ENCODE measurements at regions of chr9 and their contacts with region 1.

Region 1: DNA sequence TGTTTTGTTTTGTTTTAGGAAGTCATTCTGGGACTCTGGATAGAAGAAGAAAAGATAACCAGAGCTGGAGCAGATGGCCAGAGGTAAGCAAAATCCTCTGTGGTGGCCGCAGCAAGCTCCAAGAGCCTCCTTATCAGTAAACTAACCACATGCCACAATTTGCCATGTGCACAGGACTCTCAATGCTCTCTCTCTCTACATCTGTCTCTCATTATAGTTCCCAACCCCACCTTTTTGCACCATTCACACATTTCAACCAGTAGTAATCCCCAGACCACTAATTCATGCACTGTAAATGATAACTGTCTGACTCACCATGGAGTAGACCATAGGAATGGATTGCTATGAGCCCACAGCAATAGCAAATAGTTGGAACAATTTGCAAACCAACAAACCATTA is 526.1 kb downstream of the TLR4 start:
- DNase-seq: no peak
- ATAC-seq: no peak
- H3K4me3 ChIP-seq: no peak overlapping the region
- H3K4me3 Mint-ChIP-seq: no peak overlapping the region
- H3K27ac ChIP-seq: no peak overlapping the region
- H3K27ac Mint-ChIP-seq: no peak overlapping the region
- H3K4me1 ChIP-seq: no peaks in the 10 kb centered on the region
- H3K4me1 Mint-ChIP-seq: no peaks in the 10 kb centered on the region
- H3K27me3 ChIP-seq: no peaks in the 10 kb centered on the region
- H3K27me3 Mint-ChIP-seq: no peaks in the 10 kb centered on the region
- CTCF ChIP-seq: no peak

Region 2: GRCh38 chr9:117907420-117907819 is 322.9 kb before region 1 on chr9:
- CTCF ChIA-PET with region 1: no interaction called
- POLR2A ChIA-PET with region 1: no interaction called
- intact Hi-C with region 1: no loop called
- DNase-seq: no peak
- ATAC-seq: no peak
- H3K4me3 ChIP-seq: no peak overlapping the region
- H3K4me3 Mint-ChIP-seq: no peak overlapping the region
- H3K27ac ChIP-seq: no peak overlapping the region
- H3K27ac Mint-ChIP-seq: no peak overlapping the region
- H3K4me1 ChIP-seq: no peaks in the 10 kb centered on the region
- H3K4me1 Mint-ChIP-seq: no peaks in the 10 kb centered on the region
- H3K27me3 ChIP-seq: no peaks in the 10 kb centered on the region
- H3K27me3 Mint-ChIP-seq: peaks cover 14% of the 10 kb centered on the region
- CTCF ChIP-seq: no peak

Region 3: DNA sequence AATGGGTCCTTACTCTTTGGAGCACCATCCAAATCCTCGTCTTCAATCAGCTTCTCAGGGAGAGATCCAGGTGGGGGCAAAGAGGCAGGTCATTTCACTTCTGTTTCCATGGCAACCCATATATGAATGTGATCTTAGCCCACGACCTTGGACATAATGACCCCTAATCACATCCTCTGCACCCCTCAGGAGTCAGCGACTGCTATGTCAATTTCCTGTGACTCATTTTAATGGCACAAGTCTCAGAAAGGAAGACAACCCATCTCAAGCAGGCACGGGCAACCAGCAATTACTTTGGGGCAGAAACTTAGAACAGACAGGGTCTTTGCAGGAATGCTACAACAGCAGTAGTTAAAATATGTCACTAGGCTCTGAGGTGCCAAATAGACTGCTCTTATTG is 65.1 kb after region 1 on chr9:
- CTCF ChIA-PET with region 1: no interaction called
- POLR2A ChIA-PET with region 1: no interaction called
- intact Hi-C with region 1: loop called in 1 of 2 experiments (anchors 10 kb)
- DNase-seq: no peak
- ATAC-seq: no peak
- H3K4me3 ChIP-seq: no peak overlapping the region
- H3K4me3 Mint-ChIP-seq: no peak overlapping the region
- H3K27ac ChIP-seq: no peak overlapping the region
- H3K27ac Mint-ChIP-seq: no peak overlapping the region
- H3K4me1 ChIP-seq: no peaks in the 10 kb centered on the region
- H3K4me1 Mint-ChIP-seq: no peaks in the 10 kb centered on the region
- H3K27me3 ChIP-seq: no peaks in the 10 kb centered on the region
- H3K27me3 Mint-ChIP-seq: no peaks in the 10 kb centered on the region
- CTCF ChIP-seq: no peak

Region 4: DNA sequence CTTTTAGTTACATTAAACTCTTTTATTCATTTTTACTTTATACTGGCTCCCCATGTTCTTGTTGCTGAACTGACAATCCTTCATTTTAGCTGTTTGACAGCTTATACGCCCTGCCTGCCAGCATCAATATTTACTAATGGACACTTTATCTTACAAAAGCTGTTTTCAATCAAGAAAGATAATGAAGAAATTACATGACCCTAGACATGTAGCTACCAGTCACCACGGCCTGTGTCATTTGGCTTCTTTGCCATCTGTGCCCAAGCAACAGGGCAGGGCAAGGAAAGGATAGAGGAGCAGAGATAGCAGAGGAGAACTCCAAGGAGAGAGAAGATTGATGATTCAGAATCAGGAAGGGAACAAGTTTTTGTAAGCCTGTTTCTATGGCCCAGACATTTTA is 491.6 kb after region 1 on chr9:
- CTCF ChIA-PET with region 1: no interaction called
- POLR2A ChIA-PET with region 1: no interaction called
- intact Hi-C with region 1: no loop called
- DNase-seq: no peak
- ATAC-seq: no peak
- H3K4me3 ChIP-seq: no peak overlapping the region
- H3K4me3 Mint-ChIP-seq: no peak overlapping the region
- H3K27ac ChIP-seq: no peak overlapping the region
- H3K27ac Mint-ChIP-seq: no peak overlapping the region
- H3K4me1 ChIP-seq: no peaks in the 10 kb centered on the region
- H3K4me1 Mint-ChIP-seq: no peaks in the 10 kb centered on the region
- H3K27me3 ChIP-seq: no peaks in the 10 kb centered on the region
- H3K27me3 Mint-ChIP-seq: no peaks in the 10 kb centered on the region
- CTCF ChIP-seq: no peak